Posterior vena cava (tissue), 2 donors: ENCODE measurements at regions of chr16 and their contacts with region 1.

Region 1: DNA sequence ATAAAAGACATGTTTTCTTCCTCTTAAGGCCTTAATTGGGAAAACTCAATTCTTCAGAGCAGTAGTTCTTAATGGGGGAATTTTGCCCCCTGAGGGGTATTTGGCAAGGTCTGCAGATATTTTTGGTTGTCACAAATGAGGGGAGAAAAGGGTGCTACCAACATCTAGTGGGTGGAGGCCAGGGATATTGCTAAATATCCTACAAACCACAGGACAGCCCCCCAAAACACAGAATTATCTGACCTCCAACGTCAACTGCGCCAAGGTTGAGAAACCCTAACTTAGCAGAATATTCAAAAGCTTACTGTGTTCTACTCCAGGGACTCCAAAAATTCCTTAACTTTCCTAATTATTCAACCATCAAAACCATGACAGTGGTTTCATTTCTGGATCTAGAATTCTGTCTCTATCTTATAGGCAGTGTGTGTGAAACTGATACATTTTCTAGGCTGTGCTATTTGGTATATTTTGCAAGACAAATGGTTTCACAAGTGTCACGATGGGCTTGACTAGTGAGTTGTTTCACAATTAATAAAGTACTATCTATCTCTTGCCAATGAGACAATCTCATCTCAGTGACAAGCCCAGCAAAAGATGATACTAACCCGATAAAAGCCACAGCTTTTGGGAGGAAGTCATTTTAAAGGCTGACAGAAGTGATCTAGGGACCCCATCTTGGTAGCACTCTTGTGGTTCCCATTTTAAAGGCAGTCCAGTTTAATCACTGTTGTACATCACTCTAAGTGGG is 14.7 kb downstream of the TXNDC11 start:
- DNase-seq: no peak

Region 2: GRCh38 chr16:11446566-11447119 is 281.3 kb before region 1 on chr16:
- intact Hi-C with region 1: loop called in 1 of 2 experiments (anchors 5 kb)
- DNase-seq: no peak

Region 3: DNA sequence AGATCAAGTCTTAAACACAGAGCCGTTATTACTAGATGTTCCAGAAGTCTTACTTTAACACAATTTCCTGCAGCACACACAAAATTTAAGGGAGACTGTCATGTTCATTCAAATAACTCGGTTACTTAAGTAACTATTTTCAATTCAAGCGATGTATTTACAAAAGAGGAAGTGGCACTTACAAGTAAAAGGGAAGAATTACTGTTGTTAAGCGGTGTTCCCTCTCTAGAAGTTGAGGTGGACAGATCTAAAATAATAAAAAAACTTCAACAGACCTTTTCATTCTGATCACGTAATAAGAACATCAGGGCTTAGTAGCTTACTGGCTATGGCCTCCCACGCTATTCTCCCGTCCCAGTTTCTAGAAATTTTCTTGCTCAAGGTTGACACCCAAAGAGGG is 40.9 kb after region 1 on chr16:
- intact Hi-C with region 1: no loop called
- DNase-seq: no peak